ENCODE measurements at regions of chr9 and their contacts with region 1.

Region 1: GRCh38 chr9:94213511-94214124 is 45.5 kb upstream of the ZNF169 start:
- DNase-seq: peak; percentile 35 to 87 (median 69)
- ATAC-seq: peak; percentile 75
- H3K4me3 ChIP-seq: no peak overlapping the region
- H3K4me3 Mint-ChIP-seq: no peak overlapping the region
- H3K27ac ChIP-seq: no peak overlapping the region
- H3K27ac Mint-ChIP-seq: no peak overlapping the region
- H3K4me1 ChIP-seq: peaks cover 3% of the 10 kb centered on the region
- H3K4me1 Mint-ChIP-seq: peaks cover 4% of the 10 kb centered on the region
- H3K27me3 ChIP-seq: no peaks in the 10 kb centered on the region
- H3K27me3 Mint-ChIP-seq: peaks cover 35% of the 10 kb centered on the region
- CTCF ChIP-seq: peak; percentile 86

Region 2: DNA sequence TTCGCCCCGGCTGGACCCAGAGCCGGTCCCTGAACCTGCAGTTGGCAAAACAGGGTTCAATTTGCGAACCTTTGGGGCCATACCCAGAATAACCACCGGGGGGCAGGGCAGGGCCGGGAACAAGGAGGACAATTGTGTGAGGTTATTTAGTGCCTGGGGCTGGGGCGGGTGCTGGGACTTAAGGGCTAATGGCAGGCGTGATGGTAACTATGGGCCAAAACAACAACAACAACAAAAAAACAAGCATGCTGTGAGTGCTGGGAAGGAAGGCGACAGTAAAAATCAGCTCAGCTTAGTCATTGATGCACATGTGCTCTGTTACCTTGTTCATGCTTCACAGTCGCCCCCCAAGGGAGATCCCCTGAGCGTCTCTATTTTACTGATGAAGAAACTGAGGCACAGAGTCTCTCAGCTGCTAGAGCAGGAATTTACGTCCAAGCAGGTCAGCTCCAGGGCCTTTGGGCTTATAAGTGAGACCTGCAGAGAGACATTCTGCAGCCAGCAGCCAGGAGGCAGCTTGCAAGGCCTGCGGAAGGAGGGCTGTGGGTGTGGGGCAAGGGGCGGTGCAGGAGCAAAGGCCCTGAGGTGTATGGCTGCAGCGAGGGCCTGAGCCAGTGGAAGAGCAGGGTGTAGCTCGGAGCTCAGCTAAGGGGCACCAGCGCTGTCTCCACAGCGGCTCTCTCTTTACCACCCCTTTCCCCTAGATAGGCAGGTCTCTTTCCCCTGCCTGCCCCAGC is 531.2 kb before region 1 on chr9:
- CTCF ChIA-PET with region 1: interaction called, 3 read pairs
- POLR2A ChIA-PET with region 1: no interaction called
- intact Hi-C with region 1: loop called (anchors 2 kb)
- DNase-seq: peak; percentile 27 to 73 (median 47)
- ATAC-seq: peak; percentile 62
- H3K4me3 ChIP-seq: no peak overlapping the region
- H3K4me3 Mint-ChIP-seq: no peak overlapping the region
- H3K27ac ChIP-seq: no peak overlapping the region
- H3K27ac Mint-ChIP-seq: no peak overlapping the region
- H3K4me1 ChIP-seq: no peaks in the 10 kb centered on the region
- H3K4me1 Mint-ChIP-seq: no peaks in the 10 kb centered on the region
- H3K27me3 ChIP-seq: no peaks in the 10 kb centered on the region
- H3K27me3 Mint-ChIP-seq: peaks cover 8% of the 10 kb centered on the region
- CTCF ChIP-seq: peak; percentile 66

Region 3: GRCh38 chr9:94054716-94055115 is 158.9 kb before region 1 on chr9:
- CTCF ChIA-PET with region 1: interaction called, 311 read pairs
- POLR2A ChIA-PET with region 1: no interaction called
- intact Hi-C with region 1: no loop called
- DNase-seq: no peak
- ATAC-seq: no peak
- H3K4me3 ChIP-seq: no peak overlapping the region
- H3K4me3 Mint-ChIP-seq: no peak overlapping the region
- H3K27ac ChIP-seq: no peak overlapping the region
- H3K27ac Mint-ChIP-seq: no peak overlapping the region
- H3K4me1 ChIP-seq: no peaks in the 10 kb centered on the region
- H3K4me1 Mint-ChIP-seq: no peaks in the 10 kb centered on the region
- H3K27me3 ChIP-seq: no peaks in the 10 kb centered on the region
- H3K27me3 Mint-ChIP-seq: no peaks in the 10 kb centered on the region
- CTCF ChIP-seq: no peak

Region 4: DNA sequence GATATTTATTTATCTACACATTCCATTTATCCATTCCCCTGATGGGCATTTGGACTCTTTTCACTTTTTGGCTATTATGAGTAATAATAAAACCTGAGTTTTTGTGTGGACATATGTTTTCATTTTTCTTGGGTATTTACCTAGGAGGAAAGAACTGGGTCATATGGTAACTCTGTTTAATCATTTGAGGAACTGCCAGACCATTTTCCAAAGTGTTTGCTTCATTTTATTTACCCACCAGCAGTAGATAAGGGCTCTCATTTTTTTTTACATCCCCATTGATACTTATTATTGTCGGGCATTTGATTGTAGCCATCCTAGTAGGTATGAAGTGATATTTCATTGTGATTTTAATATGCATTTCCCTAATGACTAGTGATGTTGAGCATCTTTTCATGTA is 137.1 kb before region 1 on chr9:
- CTCF ChIA-PET with region 1: interaction called, 17 read pairs
- POLR2A ChIA-PET with region 1: no interaction called
- intact Hi-C with region 1: no loop called
- DNase-seq: no peak
- ATAC-seq: no peak
- H3K4me3 ChIP-seq: no peak overlapping the region
- H3K4me3 Mint-ChIP-seq: no peak overlapping the region
- H3K27ac ChIP-seq: no peak overlapping the region
- H3K27ac Mint-ChIP-seq: no peak overlapping the region
- H3K4me1 ChIP-seq: no peaks in the 10 kb centered on the region
- H3K4me1 Mint-ChIP-seq: no peaks in the 10 kb centered on the region
- H3K27me3 ChIP-seq: no peaks in the 10 kb centered on the region
- H3K27me3 Mint-ChIP-seq: no peaks in the 10 kb centered on the region
- CTCF ChIP-seq: no peak

Region 5: GRCh38 chr9:94173632-94174031 is 40.0 kb before region 1 on chr9:
- CTCF ChIA-PET with region 1: interaction called, 13 read pairs
- POLR2A ChIA-PET with region 1: no interaction called
- intact Hi-C with region 1: no loop called
- DNase-seq: no peak
- ATAC-seq: peak; percentile 17
- H3K4me3 ChIP-seq: no peak overlapping the region
- H3K4me3 Mint-ChIP-seq: no peak overlapping the region
- H3K27ac ChIP-seq: peak overlapping the region in 1 of 2 experiments; percentile 12
- H3K27ac Mint-ChIP-seq: peak overlapping the region; percentile 81
- H3K4me1 ChIP-seq: peaks cover 53% of the 10 kb centered on the region
- H3K4me1 Mint-ChIP-seq: peaks cover 78% of the 10 kb centered on the region
- H3K27me3 ChIP-seq: no peaks in the 10 kb centered on the region
- H3K27me3 Mint-ChIP-seq: no peaks in the 10 kb centered on the region
- CTCF ChIP-seq: no peak

Measured in CD8-positive, alpha-beta T cell (primary cell).